ENCODE measurements at regions of chrX and their contacts with region 1.

Region 1: GRCh38 chrX:68807818-68808217 is 21.0 kb upstream of the EFNB1 start:
- DNase-seq: peak; percentile 35
- H3K4me3 ChIP-seq: no peak overlapping the region
- H3K27ac ChIP-seq: no peak overlapping the region
- H3K4me1 ChIP-seq: no peaks in the 10 kb centered on the region
- H3K27me3 ChIP-seq: peaks cover 1 to 2% of the 10 kb centered on the region in 2 experiments
- CTCF ChIP-seq: peak; percentile 10 to 27
- POLR2A ChIP-seq: no peak

Region 2: GRCh38 chrX:68511255-68511654 is 296.6 kb before region 1 on chrX:
- CTCF ChIA-PET with region 1: no interaction called
- POLR2A ChIA-PET with region 1: no interaction called
- dilution Hi-C with region 1: no loop called
- intact Hi-C with region 1: loop called (anchors 1 kb)
- DNase-seq: peak; percentile 42
- H3K4me3 ChIP-seq: no peak overlapping the region
- H3K27ac ChIP-seq: no peak overlapping the region
- H3K4me1 ChIP-seq: no peaks in the 10 kb centered on the region
- H3K27me3 ChIP-seq: no peaks in the 10 kb centered on the region
- CTCF ChIP-seq: peak; percentile 41 to 46
- POLR2A ChIP-seq: no peak

Region 3: GRCh38 chrX:68631336-68631735 is 176.5 kb before region 1 on chrX:
- CTCF ChIA-PET with region 1: no interaction called
- POLR2A ChIA-PET with region 1: no interaction called
- dilution Hi-C with region 1: no loop called
- intact Hi-C with region 1: no loop called
- DNase-seq: no peak
- H3K4me3 ChIP-seq: no peak overlapping the region
- H3K27ac ChIP-seq: no peak overlapping the region
- H3K4me1 ChIP-seq: no peaks in the 10 kb centered on the region
- H3K27me3 ChIP-seq: peaks cover 0 to 3% of the 10 kb centered on the region in 2 experiments
- CTCF ChIP-seq: no peak
- POLR2A ChIP-seq: no peak

Region 4: GRCh38 chrX:68732906-68733493 is 74.8 kb before region 1 on chrX:
- CTCF ChIA-PET with region 1: interaction called, 24 read pairs
- POLR2A ChIA-PET with region 1: no interaction called
- dilution Hi-C with region 1: no loop called
- intact Hi-C with region 1: loop called (anchors 2 kb)
- DNase-seq: peak; percentile 12
- H3K4me3 ChIP-seq: no peak overlapping the region
- H3K27ac ChIP-seq: no peak overlapping the region
- H3K4me1 ChIP-seq: no peaks in the 10 kb centered on the region
- H3K27me3 ChIP-seq: no peaks in the 10 kb centered on the region
- CTCF ChIP-seq: peak; percentile 58 to 69
- POLR2A ChIP-seq: no peak